BJ (cell line): ENCODE measurements at regions of chr11 and their contacts with region 1.

Region 1: DNA sequence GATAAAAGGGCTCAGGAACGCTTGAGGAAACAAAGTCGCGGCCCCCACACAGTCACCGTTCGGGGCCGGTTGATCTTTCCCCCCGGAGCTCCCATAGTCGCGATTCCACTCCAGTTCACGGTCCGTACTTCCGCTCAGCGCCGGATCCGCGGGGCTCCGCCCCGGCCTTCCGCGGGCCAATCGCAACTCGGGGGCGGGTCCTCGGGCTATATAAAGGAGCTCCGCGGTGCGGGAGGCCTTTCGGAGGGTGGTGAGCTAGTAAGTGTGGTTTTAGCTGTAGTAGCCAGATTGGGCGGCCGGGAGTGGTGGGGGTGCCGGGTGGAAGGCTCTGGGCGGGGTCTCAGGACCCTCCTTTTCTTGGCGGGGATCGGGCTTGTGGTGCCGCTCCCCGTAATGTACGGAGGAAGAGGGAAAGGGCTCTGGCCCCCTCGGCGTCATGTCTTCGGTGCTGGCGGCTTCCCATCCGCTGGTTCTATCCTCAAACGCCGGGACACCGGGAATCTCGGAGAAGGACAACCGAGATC is at the starts of genes C11orf98 and CSKMT:
- DNase-seq: no peak
- H3K4me3 ChIP-seq: peak within 1 kb of the TSS; percentile 72
- H3K27me3 ChIP-seq: no peaks in the 10 kb centered on the region
- CTCF ChIP-seq: no peak
- polyA plus RNA-seq, gene C11orf98: 43.0 and 45.2 TPM in 2 replicates
- polyA plus RNA-seq, gene CSKMT: 5.1 and 6.6 TPM in 2 replicates

Region 2: DNA sequence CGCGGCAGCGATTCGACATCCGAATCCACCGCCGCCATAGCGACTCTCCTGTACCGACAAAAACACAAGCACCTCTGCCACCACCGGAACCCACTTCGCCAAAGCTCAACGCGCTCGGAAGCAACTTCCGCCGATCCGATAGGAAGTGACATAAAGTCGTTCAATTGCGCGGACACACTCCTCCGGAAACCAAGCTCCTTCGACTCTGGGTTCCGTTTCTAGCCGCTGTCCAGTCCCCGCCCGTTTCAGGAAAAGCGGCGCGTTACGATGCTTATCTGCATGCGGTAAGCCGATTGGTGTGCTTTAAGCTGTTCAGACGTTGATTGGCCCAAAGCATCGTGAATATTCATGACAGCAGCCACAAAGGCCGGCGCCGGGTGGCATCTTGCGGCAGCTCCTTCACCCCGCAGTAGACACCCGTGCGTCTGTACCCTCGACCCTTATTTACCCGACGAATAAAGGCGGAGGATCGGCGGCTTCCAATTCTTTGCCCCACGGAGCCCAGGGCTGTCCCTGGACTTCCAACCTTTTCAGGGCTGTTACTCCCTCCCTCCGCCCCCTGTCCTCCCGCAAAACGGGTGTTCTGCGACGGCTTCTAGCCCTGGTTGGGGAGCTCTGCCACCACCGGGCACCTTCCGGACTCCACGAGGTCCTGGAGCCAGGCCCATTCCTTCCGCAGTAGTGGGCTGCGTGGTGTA is 73.5 kb before region 1 on chr11 and contains the start of gene TUT1:
- CTCF ChIA-PET with region 1: interaction called, 9 read pairs
- POLR2A ChIA-PET with region 1: interaction called, 10 read pairs
- DNase-seq: peak; percentile 96
- H3K4me3 ChIP-seq: peak within 1 kb of the TSS; percentile 51
- H3K27me3 ChIP-seq: no peaks in the 10 kb centered on the region
- CTCF ChIP-seq: no peak
- polyA plus RNA-seq, gene TUT1: 6.4 and 9.9 TPM in 2 replicates

Region 3: DNA sequence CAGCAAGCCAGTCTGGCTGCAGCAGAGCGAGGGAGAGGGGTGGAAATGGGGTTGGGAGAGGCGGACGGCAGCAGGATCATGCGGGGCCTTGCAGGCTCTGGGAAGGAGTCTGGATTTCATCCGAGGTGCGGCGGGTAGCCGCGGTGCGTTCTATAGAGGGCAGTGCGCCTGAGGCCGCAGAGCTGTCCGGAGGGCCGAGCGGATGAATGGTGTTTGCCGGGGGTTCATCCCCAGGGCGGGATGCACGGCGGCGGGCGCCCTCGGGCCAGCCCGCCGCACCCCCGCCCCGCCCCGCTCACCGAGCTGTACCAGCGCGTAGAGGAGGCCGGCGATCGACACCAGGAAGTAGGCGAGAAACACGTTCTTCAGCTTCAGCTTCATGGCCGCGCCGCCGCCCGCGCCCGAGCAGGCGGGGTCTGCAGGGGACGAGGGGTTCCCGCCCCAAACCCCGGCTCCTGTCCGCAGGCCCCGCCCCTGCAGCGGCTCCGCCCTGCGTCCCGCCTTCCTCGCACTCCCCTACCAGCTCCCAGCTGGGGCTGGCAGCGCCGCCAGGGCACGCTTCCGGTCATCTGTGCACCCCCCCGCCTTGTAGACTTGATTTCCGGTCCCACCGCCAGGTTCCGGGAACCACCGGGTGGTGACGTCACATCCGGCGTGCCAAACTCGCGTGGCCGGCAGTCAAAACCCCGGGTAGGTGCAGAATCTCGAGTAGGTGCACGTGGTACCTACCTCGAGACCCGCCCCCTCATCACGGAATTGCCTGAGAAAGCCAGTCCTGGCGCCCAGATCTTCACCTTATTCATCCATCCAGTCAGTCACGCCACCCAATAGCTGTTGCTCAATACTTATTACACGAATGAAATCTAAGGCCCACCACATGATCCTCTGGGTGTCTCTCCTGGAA is 43.3 kb before region 1 on chr11 and contains the start of gene B3GAT3:
- CTCF ChIA-PET with region 1: interaction called, 5 read pairs
- POLR2A ChIA-PET with region 1: interaction called, 11 read pairs
- DNase-seq: peak; percentile 90
- H3K4me3 ChIP-seq: peak within 1 kb of the TSS; percentile 54
- H3K27me3 ChIP-seq: no peaks in the 10 kb centered on the region
- CTCF ChIP-seq: no peak
- polyA plus RNA-seq, gene B3GAT3: 24.5 and 42.4 TPM in 2 replicates

Region 4: DNA sequence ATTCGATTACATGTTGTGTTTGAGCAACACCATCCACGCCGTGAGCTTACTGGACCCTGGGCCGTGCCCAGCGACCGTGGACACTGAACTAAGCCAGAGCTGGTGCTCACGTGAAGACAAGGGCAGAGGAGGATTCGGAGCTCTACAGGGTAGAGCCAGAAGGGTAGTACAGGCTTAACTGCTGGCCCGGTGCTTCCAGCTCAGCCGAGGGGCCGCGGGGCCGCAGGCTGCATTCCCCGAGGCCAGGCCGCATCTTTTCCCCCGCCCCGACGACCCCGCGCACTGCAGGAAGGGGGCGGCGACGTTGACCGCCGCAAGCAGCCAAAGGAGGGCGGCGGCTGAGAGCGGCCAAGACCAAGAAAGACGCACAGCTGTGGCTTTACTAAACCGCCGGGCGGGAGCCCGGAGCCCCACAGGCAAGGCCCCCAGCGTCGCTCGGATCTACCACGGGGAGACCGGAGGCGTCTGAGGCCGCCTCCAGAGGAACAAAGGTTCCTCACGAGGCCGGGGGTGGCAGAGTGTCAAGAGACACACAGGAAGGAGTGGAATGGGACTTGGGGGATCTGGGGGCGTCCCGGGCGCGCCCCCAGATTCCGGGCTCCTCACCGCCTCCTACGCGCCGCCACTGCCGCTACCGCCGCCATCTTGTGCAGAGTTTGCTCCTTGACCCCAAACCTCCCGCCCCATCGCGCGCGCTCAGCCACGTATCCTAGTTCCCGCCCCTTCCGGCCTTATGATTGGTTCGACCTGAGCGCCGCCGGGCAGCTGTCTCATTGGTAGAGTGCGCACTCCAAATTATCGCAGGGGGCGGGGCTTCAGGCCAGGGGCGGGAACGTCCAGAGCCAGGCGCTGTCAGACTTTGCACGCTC is 18.9 kb before region 1 on chr11 and contains the start of gene GANAB:
- CTCF ChIA-PET with region 1: interaction called, 3 read pairs
- POLR2A ChIA-PET with region 1: interaction called, 19 read pairs
- DNase-seq: peak; percentile 87
- H3K4me3 ChIP-seq: peak within 1 kb of the TSS; percentile 73
- H3K27me3 ChIP-seq: no peaks in the 10 kb centered on the region
- CTCF ChIP-seq: no peak
- polyA plus RNA-seq, gene GANAB: 388 and 463 TPM in 2 replicates

Region 5: DNA sequence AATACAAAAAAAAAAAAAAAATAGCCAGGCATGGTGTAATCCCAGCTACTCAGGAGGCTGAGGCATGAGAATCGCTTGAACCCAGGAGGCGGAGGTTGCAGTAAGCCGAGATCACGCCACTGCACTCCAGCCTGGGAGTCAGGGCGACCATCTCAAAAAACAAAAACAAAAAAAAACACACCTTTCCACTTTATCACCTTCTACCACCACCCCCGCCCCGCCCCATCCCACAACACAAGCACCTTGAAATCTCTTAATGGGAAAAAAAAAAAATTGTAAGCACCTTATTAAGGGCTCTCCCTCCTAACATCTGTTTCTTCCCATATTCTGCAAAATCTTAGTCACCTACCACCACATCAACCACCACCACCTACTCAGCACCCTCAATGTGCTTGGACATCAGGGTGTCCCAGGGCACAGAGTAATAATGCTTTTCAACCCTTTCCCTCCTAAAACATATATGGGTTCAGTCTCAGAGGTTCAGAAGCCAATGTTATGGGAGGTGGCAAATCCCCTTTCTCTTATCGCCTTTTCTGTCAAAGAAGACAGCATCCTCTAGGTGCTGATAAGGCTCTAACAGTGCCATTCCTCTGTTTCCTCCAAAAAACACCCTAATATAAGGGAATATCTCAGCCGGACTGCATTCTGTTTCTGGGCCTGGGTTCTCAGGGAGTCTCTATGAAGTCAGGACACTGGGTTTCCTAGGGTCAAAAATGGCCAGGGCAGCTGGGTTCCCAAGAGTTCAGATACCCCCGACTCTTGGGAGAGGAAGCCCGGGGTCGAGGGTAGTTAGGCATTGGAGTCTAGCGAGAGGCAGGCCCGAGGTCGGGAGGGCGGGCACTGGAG is 12.8 kb before region 1 on chr11:
- CTCF ChIA-PET with region 1: interaction called, 7 read pairs
- POLR2A ChIA-PET with region 1: interaction called, 10 read pairs
- DNase-seq: no peak
- H3K4me3 ChIP-seq: peak overlapping the region; percentile 61
- H3K27me3 ChIP-seq: no peaks in the 10 kb centered on the region
- CTCF ChIP-seq: no peak

Region 6: DNA sequence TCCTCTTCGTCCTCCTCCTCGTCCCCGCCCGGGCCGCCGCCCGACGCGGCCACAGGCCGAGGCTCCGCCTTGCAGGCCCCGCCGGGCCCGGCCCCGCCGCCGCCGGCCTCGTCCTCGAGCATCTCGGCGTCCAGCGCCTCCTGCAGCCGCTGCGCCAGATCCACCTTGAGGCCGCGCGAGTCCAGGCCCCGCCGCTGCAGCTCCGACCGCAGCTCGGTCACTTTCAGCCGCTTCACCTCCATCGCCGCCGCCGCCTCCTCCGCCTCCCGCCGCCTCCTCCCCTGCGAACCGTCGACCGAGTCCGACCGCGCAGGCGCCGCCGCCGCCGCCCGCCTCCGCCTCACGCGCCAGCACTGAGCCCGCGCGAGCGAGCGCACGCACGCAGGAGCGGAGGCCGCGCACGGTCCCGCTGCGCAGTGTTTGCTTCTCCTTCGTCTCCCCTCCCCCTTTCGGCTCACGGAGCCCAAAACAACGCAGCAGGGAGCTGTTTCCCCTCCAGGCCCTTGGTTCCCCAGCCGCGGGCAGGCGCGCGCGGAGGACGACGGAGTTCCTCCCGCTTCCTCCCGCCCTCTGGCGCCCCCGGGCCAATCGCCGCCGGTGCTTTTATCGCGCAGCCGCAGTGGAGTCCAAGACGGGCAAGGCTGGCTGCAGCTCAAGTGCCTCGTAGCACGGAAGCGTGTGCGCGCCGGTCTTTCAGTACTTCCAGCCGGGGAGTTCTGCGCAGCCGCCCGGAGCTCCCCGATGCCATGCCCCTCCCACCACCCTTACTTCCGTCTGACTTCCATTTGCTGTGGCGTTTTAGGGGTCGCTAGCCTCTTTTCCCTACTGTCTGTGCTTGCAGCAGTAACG is 62.0 kb after region 1 on chr11 and contains the start of gene HNRNPUL2:
- CTCF ChIA-PET with region 1: no interaction called
- POLR2A ChIA-PET with region 1: interaction called, 12 read pairs
- DNase-seq: peak; percentile 91
- H3K4me3 ChIP-seq: peak within 1 kb of the TSS; percentile 88
- H3K27me3 ChIP-seq: no peaks in the 10 kb centered on the region
- CTCF ChIP-seq: no peak; the same call in 1 of the 2 replicates
- polyA plus RNA-seq, gene HNRNPUL2: 10.0 and 17.3 TPM in 2 replicates

Region 7: GRCh38 chr11:62753736-62754603 is 88.8 kb after region 1 on chr11 and contains the start of gene ZBTB3:
- CTCF ChIA-PET with region 1: no interaction called
- POLR2A ChIA-PET with region 1: interaction called, 17 read pairs
- DNase-seq: peak; percentile 98
- H3K4me3 ChIP-seq: peak within 1 kb of the TSS; percentile 75
- H3K27me3 ChIP-seq: no peaks in the 10 kb centered on the region
- CTCF ChIP-seq: no peak
- polyA plus RNA-seq, gene ZBTB3: 3.5 and 3.8 TPM in 2 replicates

Region 8: GRCh38 chr11:62805076-62805892 is 140.1 kb after region 1 on chr11 and contains the start of gene NXF1:
- CTCF ChIA-PET with region 1: no interaction called
- POLR2A ChIA-PET with region 1: no interaction called
- DNase-seq: peak; percentile 65
- H3K4me3 ChIP-seq: peak within 1 kb of the TSS; percentile 77
- H3K27me3 ChIP-seq: no peaks in the 10 kb centered on the region
- CTCF ChIP-seq: peak; percentile 15; the same call in 1 of the 2 replicates
- polyA plus RNA-seq, gene NXF1: 37.8 and 51.0 TPM in 2 replicates